Activated T-helper 2 cell treated with anti-CD3 and anti-CD28 coated beads, Interferon-gamma antibody, Interleukin-2, Interleukin-4, amounts not matched to agents 10 μg/mL and 5 μg/mL and 100 μg/mL, durations not matched to agents 14 hours and 24 hours and 36 hours (primary cell): ENCODE measurements at regions of chr7 and their contacts with region 1.

Region 1: GRCh38 chr7:129009437-129009836 is 45.5 kb downstream of the TNPO3 start:
- DNase-seq: no peak
- H3K4me3 Mint-ChIP-seq: no peak overlapping the region
- H3K27ac Mint-ChIP-seq: peak overlapping the region; percentile 87
- H3K4me1 Mint-ChIP-seq: peaks cover 30% of the 10 kb centered on the region
- H3K27me3 Mint-ChIP-seq: no peaks in the 10 kb centered on the region

Region 2: GRCh38 chr7:128883622-128884501 is 125.6 kb before region 1 on chr7:
- intact Hi-C with region 1: no loop called
- DNase-seq: peak; percentile 69
- H3K4me3 Mint-ChIP-seq: no peak overlapping the region
- H3K27ac Mint-ChIP-seq: no peak overlapping the region
- H3K4me1 Mint-ChIP-seq: no peaks in the 10 kb centered on the region
- H3K27me3 Mint-ChIP-seq: peaks cover 2% of the 10 kb centered on the region

Region 3: DNA sequence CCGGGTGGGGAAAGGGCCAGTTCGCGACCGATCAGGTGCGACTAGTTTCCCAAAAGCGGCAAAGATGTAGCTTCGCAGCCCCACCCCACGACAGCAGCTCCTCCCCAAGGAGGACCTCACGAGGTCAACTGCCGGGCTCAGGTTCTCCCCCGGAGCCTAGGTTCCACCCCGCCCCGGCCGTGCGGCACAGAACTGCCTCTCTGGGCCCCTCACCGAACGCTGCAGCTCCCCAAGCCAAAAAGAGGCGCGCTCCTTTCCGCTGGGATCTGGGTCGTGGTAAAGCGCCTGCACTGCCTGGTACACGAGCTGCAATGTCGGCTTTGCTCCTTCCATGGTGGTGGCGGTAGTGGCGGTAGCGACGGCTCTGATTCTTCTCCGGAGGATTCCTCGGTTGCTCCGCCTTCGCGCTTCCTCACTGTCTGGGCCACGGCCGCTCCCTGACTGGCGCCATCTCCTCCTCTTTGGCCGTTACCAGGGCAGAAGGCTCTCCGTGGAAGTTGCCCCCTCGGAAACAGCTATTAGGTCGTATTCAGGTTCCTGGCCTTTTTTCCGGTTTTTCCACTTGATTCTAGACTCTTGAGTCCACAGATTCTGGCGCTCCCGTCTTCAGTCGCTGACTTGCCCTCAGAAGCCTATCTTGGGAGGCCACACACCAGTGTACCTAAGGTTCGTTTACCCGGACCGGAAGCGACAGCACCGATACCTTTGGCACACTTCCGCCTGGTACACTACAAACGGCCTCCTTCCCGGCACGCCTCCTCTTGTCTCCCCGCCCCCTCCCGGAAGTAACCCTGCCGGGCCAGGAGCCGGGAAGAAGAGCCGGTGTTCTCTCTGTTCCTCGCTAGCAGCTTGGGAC is 45.2 kb after region 1 on chr7 and contains the start of gene TNPO3:
- intact Hi-C with region 1: loop called (anchors 2 kb)
- DNase-seq: peak; percentile 87
- H3K4me3 Mint-ChIP-seq: peak within 1 kb of the TSS; percentile 99
- H3K27ac Mint-ChIP-seq: peak within 1 kb of the TSS; percentile 100
- H3K4me1 Mint-ChIP-seq: peaks cover 20% of the 10 kb centered on the region
- H3K27me3 Mint-ChIP-seq: peaks cover 9% of the 10 kb centered on the region
- total RNA-seq, gene TNPO3: 53.3 and 53.7 TPM in 2 replicates